Pancreas (tissue), 10 donors: ENCODE measurements at regions of chr17 and their contacts with region 1.

Region 1: GRCh38 chr17:76408052-76408849 is 23.8 kb downstream of the SPHK1 start:
- DNase-seq: peak; percentile 70 to 91 (median 83)
- ATAC-seq: peak; percentile 57 to 88 (median 80)
- H3K4me3 ChIP-seq: no peak overlapping the region
- H3K27ac ChIP-seq: no peak overlapping the region
- H3K4me1 ChIP-seq: no peaks in the 10 kb centered on the region
- H3K27me3 ChIP-seq: no peaks in the 10 kb centered on the region
- CTCF ChIP-seq: peak; percentile 82 to 86 (median 84)

Region 2: GRCh38 chr17:76000016-76000754 is 408.1 kb before region 1 on chr17:
- intact Hi-C with region 1: no loop called
- DNase-seq: peak in 5 of 6 donors; percentile 43 to 86 (median 77)
- ATAC-seq: peak; percentile 47 to 65 (median 62)
- H3K4me3 ChIP-seq: no peak overlapping the region
- H3K27ac ChIP-seq: peak overlapping the region in 2 of 4 donors; percentile 2 to 60
- H3K4me1 ChIP-seq: peaks cover 8 to 20% (median 14%) of the 10 kb centered on the region in 3 donors
- H3K27me3 ChIP-seq: no peaks in the 10 kb centered on the region
- CTCF ChIP-seq: peak; percentile 51 to 67 (median 56)

Region 3: DNA sequence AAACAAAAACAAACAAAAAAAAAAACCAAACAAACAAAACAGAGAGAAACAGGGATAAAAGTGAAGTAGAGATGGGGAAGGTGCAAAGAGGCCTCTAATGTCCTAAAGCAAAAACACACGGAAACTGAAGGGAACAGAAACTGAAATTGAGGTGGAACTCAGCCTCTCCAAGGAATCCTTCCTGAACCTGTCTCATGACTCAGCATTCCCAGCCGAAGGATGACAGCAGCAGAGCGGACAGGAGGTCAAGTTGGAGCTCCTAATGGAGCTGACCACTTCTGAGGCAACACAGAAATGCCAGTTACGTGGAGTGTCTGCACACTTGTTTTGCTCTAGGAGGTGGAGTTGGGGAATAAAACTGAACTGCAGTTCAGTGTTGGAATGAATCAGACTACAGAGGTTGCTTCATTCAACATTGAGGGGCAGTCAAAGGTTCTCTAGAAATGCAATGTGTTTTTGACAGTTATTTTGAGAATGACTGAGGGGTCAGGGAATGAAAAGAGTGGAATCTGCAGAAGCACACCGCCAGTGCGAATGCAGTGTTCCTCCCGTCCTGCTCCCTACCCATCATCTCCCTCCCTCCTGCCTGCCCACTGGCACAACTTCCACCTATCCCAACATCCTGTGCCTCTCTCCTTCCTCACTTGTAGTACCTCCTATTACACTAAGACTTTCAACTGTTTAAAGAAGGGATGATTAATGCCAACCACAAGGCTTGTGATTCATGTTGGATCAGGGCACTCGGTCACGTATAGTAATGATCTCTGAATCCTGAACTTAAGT is 38.4 kb after region 1 on chr17:
- intact Hi-C with region 1: no loop called
- DNase-seq: peak in 1 of 6 donors; percentile 24
- ATAC-seq: peak; percentile 44 to 82 (median 74)
- H3K4me3 ChIP-seq: no peak overlapping the region
- H3K27ac ChIP-seq: no peak overlapping the region
- H3K4me1 ChIP-seq: peaks cover 0 to 15% (median 4%) of the 10 kb centered on the region in 3 donors
- H3K27me3 ChIP-seq: no peaks in the 10 kb centered on the region
- CTCF ChIP-seq: no peak

Region 4: GRCh38 chr17:76458580-76459490 is 50.6 kb after region 1 on chr17:
- intact Hi-C with region 1: loop called in 1 of 3 experiments (anchors 5 kb)
- DNase-seq: peak; percentile 52 to 82 (median 64)
- ATAC-seq: peak; percentile 77 to 92 (median 87)
- H3K4me3 ChIP-seq: no peak overlapping the region
- H3K27ac ChIP-seq: no peak overlapping the region
- H3K4me1 ChIP-seq: no peaks in the 10 kb centered on the region
- H3K27me3 ChIP-seq: no peaks in the 10 kb centered on the region
- CTCF ChIP-seq: peak in 1 of 4 donors; percentile 22

Region 5: GRCh38 chr17:76501018-76501826 is 93.0 kb after region 1 on chr17 and contains the start of gene RHBDF2:
- intact Hi-C with region 1: loop called in 2 of 3 experiments (anchors 5 to 10 kb)
- DNase-seq: peak; percentile 92 to 100 (median 98)
- ATAC-seq: peak; percentile 81 to 89 (median 86)
- H3K4me3 ChIP-seq: peak within 1 kb of the TSS; percentile 66 to 92 (median 83)
- H3K27ac ChIP-seq: peak within 1 kb of the TSS; percentile 74 to 94 (median 90)
- H3K4me1 ChIP-seq: peaks cover 29 to 38% (median 38%) of the 10 kb centered on the region in 3 donors
- H3K27me3 ChIP-seq: no peaks in the 10 kb centered on the region
- CTCF ChIP-seq: no peak
- total RNA-seq, gene RHBDF2: 19.0 to 50.1 (median 22.4) TPM